Common myeloid progenitor, CD34-positive (primary cell): ENCODE measurements at regions of chr1 and their contacts with region 1.

Region 1: GRCh38 chr1:182397771-182398393 is 2.6 kb downstream of the TEDDM1 start:
- DNase-seq: no peak
- H3K4me3 ChIP-seq: no peak overlapping the region
- H3K27ac ChIP-seq: no peak overlapping the region
- H3K4me1 ChIP-seq: peaks cover 9 to 39% (median 18%) of the 10 kb centered on the region in 4 experiments
- H3K27me3 ChIP-seq: no peaks in the 10 kb centered on the region

Region 2: DNA sequence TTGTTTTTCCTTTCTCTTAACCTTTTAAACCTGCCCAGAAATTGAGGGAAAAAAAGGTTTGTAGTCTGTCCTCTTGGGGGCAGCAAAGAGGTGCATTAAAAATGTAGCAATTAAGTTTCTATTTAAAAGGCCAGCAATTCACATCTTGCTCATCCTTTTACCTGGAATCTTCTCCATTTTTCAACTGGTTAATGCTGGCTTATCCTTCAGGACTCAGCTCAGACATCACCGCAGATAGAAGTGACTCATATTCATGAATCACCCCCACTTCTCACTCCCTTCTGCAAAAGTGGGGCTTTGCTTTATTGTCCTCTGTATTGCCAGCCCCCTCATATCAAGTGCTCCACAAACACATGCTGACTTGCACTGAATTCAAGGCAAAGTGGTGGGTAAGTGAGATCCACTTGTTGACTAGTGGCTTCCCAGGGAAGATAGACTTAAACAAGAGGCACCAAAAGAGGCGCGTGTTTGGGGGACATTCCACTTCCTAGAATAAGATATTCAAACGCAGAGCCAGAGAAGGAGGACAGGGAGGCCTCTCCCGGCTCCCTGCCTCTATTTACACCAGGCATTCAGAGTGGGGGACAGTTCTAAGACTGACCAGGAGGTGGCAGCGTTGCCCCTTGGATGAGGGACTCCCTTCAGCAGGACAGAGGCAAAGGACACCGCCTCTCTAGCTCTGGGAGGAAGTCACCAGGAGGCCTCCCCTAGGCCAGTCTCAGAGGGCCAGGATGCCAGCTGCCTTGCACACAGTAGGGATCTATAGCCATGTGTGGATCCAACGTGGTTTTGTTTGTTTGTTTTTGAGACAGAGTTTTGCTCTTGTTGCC is 313.2 kb before region 1 on chr1:
- CTCF ChIA-PET with region 1: interaction called, 51 read pairs
- POLR2A ChIA-PET with region 1: interaction called, 6 read pairs
- DNase-seq: peak; percentile 78 to 89 (median 85)
- H3K4me3 ChIP-seq: peak overlapping the region in 3 of 7 experiments; percentile 29 to 49 (median 48)
- H3K27ac ChIP-seq: no peak overlapping the region
- H3K4me1 ChIP-seq: peaks cover 0 to 19% (median 16%) of the 10 kb centered on the region in 4 experiments
- H3K27me3 ChIP-seq: no peaks in the 10 kb centered on the region

Region 3: GRCh38 chr1:182149411-182149965 is 248.4 kb before region 1 on chr1:
- CTCF ChIA-PET with region 1: interaction called, 236 read pairs
- POLR2A ChIA-PET with region 1: no interaction called
- DNase-seq: peak; percentile 78 to 93 (median 92)
- H3K4me3 ChIP-seq: peak overlapping the region in 1 of 7 experiments; percentile 13
- H3K27ac ChIP-seq: peak overlapping the region in 1 of 2 experiments; percentile 52
- H3K4me1 ChIP-seq: peaks cover 5 to 57% (median 17%) of the 10 kb centered on the region in 4 experiments
- H3K27me3 ChIP-seq: no peaks in the 10 kb centered on the region

Region 4: GRCh38 chr1:182301467-182302198 is 96.2 kb before region 1 on chr1:
- CTCF ChIA-PET with region 1: interaction called, 10 read pairs
- POLR2A ChIA-PET with region 1: no interaction called
- DNase-seq: peak; percentile 25 to 67 (median 59)
- H3K4me3 ChIP-seq: no peak overlapping the region
- H3K27ac ChIP-seq: peak overlapping the region in 1 of 2 experiments; percentile 81
- H3K4me1 ChIP-seq: peaks cover 0 to 51% (median 34%) of the 10 kb centered on the region in 4 experiments
- H3K27me3 ChIP-seq: no peaks in the 10 kb centered on the region